SK-N-SH (cell line): ENCODE measurements at regions of chr16 and their contacts with region 1.

Region 1: DNA sequence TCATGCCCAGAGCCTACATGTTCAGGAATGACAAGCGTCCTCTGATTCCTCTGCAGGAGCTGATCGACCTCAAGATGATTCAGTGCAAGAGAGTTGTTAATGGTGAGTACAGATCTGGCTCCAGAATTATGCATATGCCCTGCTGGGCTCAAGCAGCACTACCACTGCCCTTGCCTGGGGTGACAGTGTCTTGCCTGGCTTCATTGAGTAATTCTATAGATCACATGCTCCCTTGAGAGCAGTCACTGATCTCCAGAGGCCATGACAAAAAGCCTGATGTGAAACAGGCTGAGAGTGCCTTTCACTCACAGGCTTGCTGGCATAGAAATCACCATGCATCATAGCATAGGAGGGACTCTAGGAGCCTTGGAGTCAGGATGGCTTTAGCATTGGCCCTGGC is 26.4 kb downstream of the DUS2 start:
- DNase-seq: no peak
- H3K4me3 ChIP-seq: no peak overlapping the region
- H3K27ac ChIP-seq: no peak overlapping the region
- H3K4me1 ChIP-seq: no peaks in the 10 kb centered on the region
- H3K27me3 ChIP-seq: no peaks in the 10 kb centered on the region
- CTCF ChIP-seq: no peak
- EP300 ChIP-seq: no peak
- RAD21 ChIP-seq: no peak

Region 2: DNA sequence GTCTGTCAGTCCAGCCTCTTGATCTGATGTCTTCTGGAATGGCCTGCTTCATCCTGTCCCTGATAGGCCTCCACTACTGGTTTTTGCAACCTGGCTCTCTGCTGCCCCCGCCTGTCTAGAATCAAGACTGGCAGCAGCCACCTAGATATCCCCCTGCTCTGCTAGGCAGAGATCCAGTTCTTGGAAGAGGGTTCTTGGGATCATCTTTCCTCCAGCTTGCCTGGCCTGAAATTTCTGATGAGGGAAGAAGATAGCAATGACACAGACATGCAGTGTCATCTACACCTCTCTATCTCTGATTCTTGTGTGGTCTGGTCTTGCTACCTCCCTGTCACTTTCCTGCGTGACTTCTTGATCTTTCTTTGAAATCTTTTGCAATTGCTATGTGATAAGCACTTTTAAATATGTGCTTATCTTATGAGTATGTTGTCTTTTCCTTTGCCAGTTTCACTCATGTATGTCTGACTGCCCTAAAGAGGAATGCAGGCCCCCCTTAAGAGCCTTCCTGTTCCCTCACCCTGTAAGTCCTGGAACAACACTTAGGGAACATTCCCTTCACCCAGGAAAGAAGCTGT is 15.4 kb after region 1 on chr16:
- CTCF ChIA-PET with region 1: interaction called, 12 read pairs
- POLR2A ChIA-PET with region 1: no interaction called
- DNase-seq: peak; percentile 77
- H3K4me3 ChIP-seq: no peak overlapping the region; a peak in 1 of 4 replicates
- H3K27ac ChIP-seq: peak overlapping the region; percentile 40 to 70; a peak in 3 of 4 replicates
- H3K4me1 ChIP-seq: peaks cover 0 to 19% of the 10 kb centered on the region in 2 experiments; a peak in 2 of 4 replicates
- H3K27me3 ChIP-seq: no peaks in the 10 kb centered on the region
- CTCF ChIP-seq: peak; percentile 86
- EP300 ChIP-seq: no peak; a peak in 1 of 4 replicates
- RAD21 ChIP-seq: peak; percentile 69

Region 3: DNA sequence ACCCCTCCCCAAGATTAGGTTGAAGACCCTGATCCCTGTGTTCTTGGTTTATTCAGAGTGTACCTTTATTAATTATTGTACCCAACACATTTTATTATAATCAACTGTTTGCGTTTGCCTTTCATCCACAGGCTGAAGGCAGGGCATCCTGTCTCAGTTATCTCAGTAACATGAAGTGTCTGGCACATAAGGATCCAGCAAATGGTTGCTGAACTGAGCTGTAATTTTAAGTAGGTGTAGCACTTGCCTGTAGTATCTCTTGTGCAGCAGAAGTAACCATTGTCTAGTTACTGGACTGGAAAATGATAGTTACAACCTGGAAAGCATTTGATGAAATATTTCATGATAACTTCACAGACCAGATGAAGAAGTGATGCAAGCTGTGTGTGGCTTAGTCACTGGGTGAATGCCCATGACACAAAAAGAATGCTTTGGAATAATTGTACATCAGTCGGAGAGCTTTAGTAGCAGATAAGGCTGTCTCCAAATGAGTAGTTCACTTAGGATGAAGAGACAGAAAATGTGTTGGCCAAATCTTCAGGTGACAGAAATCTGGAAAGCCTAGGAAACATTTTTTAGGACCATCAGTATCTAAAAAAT is 129.8 kb after region 1 on chr16:
- CTCF ChIA-PET with region 1: no interaction called
- POLR2A ChIA-PET with region 1: no interaction called
- DNase-seq: no peak
- H3K4me3 ChIP-seq: no peak overlapping the region
- H3K27ac ChIP-seq: no peak overlapping the region
- H3K4me1 ChIP-seq: no peaks in the 10 kb centered on the region
- H3K27me3 ChIP-seq: no peaks in the 10 kb centered on the region
- CTCF ChIP-seq: no peak
- EP300 ChIP-seq: no peak
- RAD21 ChIP-seq: no peak